ENCODE measurements at regions of chr2 and their contacts with region 1.

Region 1: DNA sequence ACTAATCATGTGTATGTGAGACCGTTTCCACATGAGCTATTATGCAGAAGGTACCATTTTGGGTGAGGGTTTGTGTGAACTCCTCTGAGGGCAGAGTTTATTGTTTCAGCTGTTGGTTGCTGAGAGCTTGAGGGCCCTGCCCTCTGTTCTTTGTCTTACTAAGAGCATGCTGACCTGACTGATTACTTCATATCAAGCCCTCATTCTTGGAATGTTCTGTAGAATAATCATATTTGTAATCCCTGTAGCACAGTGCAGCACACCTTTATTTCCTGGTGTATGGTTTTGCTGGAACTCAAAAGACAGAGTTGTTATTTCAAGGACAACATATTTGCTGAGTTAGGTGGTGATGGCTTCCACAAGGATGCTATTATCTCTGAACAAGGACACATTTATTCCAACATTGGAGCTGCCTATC is 118.5 kb downstream of the GALNT3 start:
- DNase-seq: no peak
- ATAC-seq: no peak
- H3K4me3 ChIP-seq: no peak overlapping the region
- H3K27ac ChIP-seq: no peak overlapping the region
- H3K4me1 ChIP-seq: no peaks in the 10 kb centered on the region
- H3K27me3 ChIP-seq: no peaks in the 10 kb centered on the region
- CTCF ChIP-seq: no peak
- POLR2A ChIP-seq: no peak

Region 2: DNA sequence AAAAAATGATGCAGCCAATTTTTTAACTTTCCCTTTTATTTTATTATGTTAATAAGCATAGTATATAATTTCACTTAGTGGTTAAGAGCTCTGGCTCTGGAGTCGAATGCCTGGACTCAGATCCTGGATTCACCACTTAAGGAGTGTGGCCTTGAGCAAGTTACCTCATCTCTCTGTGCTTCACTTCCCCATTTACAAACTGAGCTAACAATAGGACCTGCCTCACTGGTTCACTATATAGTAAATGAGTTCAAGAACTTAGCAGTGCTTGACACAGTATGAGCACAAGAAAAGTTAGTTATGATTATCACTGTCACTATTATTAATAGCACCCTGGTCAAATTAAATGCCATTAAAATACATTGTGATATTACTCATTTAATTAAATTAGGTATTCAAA is 502.3 kb before region 1 on chr2:
- in situ Hi-C with region 1: no loop called
- intact Hi-C with region 1: no loop called
- DNase-seq: no peak
- ATAC-seq: no peak
- H3K4me3 ChIP-seq: no peak overlapping the region
- H3K27ac ChIP-seq: no peak overlapping the region
- H3K4me1 ChIP-seq: no peaks in the 10 kb centered on the region
- H3K27me3 ChIP-seq: no peaks in the 10 kb centered on the region
- CTCF ChIP-seq: no peak
- POLR2A ChIP-seq: no peak

Region 3: GRCh38 chr2:165185633-165186032 is 489.9 kb before region 1 on chr2:
- in situ Hi-C with region 1: no loop called
- intact Hi-C with region 1: no loop called
- DNase-seq: no peak
- ATAC-seq: no peak
- H3K4me3 ChIP-seq: no peak overlapping the region
- H3K27ac ChIP-seq: no peak overlapping the region
- H3K4me1 ChIP-seq: no peaks in the 10 kb centered on the region
- H3K27me3 ChIP-seq: no peaks in the 10 kb centered on the region
- CTCF ChIP-seq: no peak
- POLR2A ChIP-seq: no peak

Region 4: DNA sequence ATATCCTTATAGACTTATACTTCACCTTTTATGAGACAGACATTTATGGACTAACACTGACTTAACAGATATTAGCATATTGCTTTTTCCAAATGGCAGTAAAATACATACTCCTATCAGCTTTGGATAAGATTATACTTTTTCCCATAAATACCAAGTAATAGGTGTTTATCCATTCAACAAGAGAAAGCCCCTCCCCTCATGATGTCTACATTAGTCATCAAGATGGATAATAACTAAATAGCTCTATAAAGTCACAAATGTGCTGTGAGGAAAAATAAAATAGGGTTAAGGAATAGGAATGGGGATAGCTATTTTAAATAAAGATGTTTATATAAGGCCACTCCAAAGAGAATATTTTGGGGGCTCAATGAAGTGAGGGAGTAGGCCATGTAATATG is 166.6 kb before region 1 on chr2:
- in situ Hi-C with region 1: no loop called
- intact Hi-C with region 1: no loop called
- DNase-seq: no peak
- ATAC-seq: no peak
- H3K4me3 ChIP-seq: no peak overlapping the region
- H3K27ac ChIP-seq: no peak overlapping the region
- H3K4me1 ChIP-seq: no peaks in the 10 kb centered on the region
- H3K27me3 ChIP-seq: no peaks in the 10 kb centered on the region
- CTCF ChIP-seq: no peak
- POLR2A ChIP-seq: no peak

Region 5: DNA sequence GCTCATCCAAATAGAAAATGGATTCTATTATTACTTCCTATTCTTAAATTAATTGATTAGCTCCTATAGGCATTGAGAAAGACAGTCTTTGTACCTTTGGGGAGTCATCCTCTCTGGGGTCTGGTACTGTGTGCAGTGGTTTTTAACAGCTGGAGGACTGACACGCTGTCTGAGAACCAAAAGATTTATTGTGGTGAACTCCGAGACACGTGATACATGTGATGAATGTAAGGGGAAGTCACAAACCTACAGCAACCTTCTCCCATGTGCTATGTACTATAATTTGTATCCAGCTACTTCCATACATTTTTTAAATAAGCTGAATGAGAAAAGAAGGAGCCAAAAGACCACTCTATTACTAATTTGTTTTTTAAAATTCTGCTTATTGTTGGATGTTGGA is 15.2 kb before region 1 on chr2:
- in situ Hi-C with region 1: no loop called
- intact Hi-C with region 1: loop called (anchors 1 kb)
- DNase-seq: no peak
- ATAC-seq: no peak
- H3K4me3 ChIP-seq: no peak overlapping the region
- H3K27ac ChIP-seq: no peak overlapping the region
- H3K4me1 ChIP-seq: no peaks in the 10 kb centered on the region
- H3K27me3 ChIP-seq: no peaks in the 10 kb centered on the region
- CTCF ChIP-seq: no peak
- POLR2A ChIP-seq: no peak

Region 6: GRCh38 chr2:166106431-166107015 is 431.0 kb after region 1 on chr2:
- in situ Hi-C with region 1: no loop called
- intact Hi-C with region 1: no loop called
- DNase-seq: no peak
- ATAC-seq: no peak
- H3K4me3 ChIP-seq: no peak overlapping the region
- H3K27ac ChIP-seq: no peak overlapping the region
- H3K4me1 ChIP-seq: no peaks in the 10 kb centered on the region
- H3K27me3 ChIP-seq: no peaks in the 10 kb centered on the region
- CTCF ChIP-seq: no peak
- POLR2A ChIP-seq: no peak

Measured in gastrocnemius medialis (tissue), 4 donors.